ENCODE measurements at regions of chr4 and their contacts with region 1.

Region 1: GRCh38 chr4:98260579-98261290 is 449 bp upstream of the RAP1GDS1 start:
- DNase-seq: peak; percentile 91
- H3K4me3 Mint-ChIP-seq: peak overlapping the region; percentile 92
- H3K27ac Mint-ChIP-seq: peak overlapping the region; percentile 93
- H3K4me1 Mint-ChIP-seq: peaks cover 44% of the 10 kb centered on the region
- H3K27me3 Mint-ChIP-seq: no peaks in the 10 kb centered on the region

Region 2: GRCh38 chr4:98143001-98143899 is 117.5 kb before region 1 on chr4 and contains the start of gene STPG2:
- CTCF ChIA-PET with region 1: interaction called, 3 read pairs
- POLR2A ChIA-PET with region 1: interaction called, 15 read pairs
- DNase-seq: peak; percentile 94
- H3K4me3 Mint-ChIP-seq: peak within 1 kb of the TSS; percentile 79
- H3K27ac Mint-ChIP-seq: peak within 1 kb of the TSS; percentile 85
- H3K4me1 Mint-ChIP-seq: peaks cover 27% of the 10 kb centered on the region
- H3K27me3 Mint-ChIP-seq: peaks cover under 1% of the 10 kb centered on the region
- total RNA-seq, gene STPG2: not detected

Region 3: DNA sequence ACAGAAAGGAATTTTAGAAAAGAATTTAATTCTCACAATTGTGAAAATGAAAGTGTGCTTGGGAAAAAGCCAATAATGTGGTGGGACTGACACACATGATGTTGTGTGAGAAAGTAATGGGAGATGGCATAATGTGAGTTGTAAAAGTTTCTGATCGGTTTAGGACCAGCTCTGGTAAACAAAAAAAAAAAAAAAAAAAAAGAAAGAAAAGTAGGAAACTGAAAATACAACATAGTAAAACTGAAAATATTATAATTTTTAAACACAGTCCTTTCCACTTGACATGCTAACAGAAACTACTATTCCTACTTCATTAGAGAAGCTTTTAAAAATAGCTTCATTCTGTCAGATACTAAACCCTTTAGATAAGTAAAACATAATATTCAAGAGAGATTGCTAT is 28.6 kb after region 1 on chr4:
- CTCF ChIA-PET with region 1: no interaction called
- POLR2A ChIA-PET with region 1: interaction called, 14 read pairs
- DNase-seq: no peak
- H3K4me3 Mint-ChIP-seq: peak overlapping the region; percentile 11
- H3K27ac Mint-ChIP-seq: peak overlapping the region; percentile 17
- H3K4me1 Mint-ChIP-seq: peaks cover 32% of the 10 kb centered on the region
- H3K27me3 Mint-ChIP-seq: no peaks in the 10 kb centered on the region

Region 4: DNA sequence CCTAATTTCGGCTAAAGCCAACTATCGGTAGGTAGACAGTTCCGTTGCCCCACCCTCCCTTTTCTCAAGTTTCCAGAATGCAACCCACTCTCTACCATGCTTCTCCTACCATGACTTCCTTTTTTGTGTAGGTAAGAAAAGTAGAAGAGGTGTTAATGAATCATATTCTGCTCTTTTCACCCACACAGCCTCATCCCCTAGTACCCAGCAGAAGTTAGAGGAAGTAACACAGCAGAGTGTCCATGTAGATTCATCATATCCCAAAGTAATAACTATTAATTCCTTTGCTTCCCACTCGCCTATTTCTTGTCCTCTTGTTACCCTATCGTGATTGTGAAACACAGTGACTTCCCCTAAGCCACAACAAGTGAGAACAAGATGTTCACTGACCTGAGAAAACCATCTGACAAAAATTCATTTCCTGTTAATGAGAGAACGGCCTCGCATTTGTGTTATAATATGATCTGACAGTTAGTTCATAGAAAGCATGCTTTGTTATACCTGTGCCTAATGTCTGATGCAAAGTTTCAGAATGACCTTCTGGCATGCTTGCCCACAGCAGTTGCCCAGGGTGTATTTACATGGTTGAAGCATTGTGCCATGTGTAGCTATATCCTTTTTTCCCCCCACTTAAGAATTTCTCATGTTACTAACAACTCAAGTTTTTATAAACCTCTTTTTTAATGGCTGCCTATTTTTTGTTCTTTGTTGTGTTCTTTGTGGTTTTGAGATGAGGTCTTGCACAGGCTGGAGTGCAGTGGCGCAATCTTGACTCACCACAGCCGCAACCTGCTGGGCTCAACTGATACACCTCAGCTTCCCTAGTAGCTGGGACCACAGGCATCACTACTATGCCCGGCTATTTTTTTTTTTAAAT is 186.0 kb after region 1 on chr4:
- CTCF ChIA-PET with region 1: no interaction called
- POLR2A ChIA-PET with region 1: interaction called, 19 read pairs
- DNase-seq: peak; percentile 79
- H3K4me3 Mint-ChIP-seq: peak overlapping the region; percentile 40
- H3K27ac Mint-ChIP-seq: peak overlapping the region; percentile 91
- H3K4me1 Mint-ChIP-seq: peaks cover 43% of the 10 kb centered on the region
- H3K27me3 Mint-ChIP-seq: no peaks in the 10 kb centered on the region

Region 5: GRCh38 chr4:99088481-99089365 is 828.0 kb after region 1 on chr4 and contains the start of gene ADH5:
- CTCF ChIA-PET with region 1: no interaction called
- POLR2A ChIA-PET with region 1: interaction called, 10 read pairs
- DNase-seq: peak; percentile 92
- H3K4me3 Mint-ChIP-seq: peak within 1 kb of the TSS; percentile 93
- H3K27ac Mint-ChIP-seq: peak within 1 kb of the TSS; percentile 97
- H3K4me1 Mint-ChIP-seq: peaks cover 45% of the 10 kb centered on the region
- H3K27me3 Mint-ChIP-seq: no peaks in the 10 kb centered on the region
- total RNA-seq, gene ADH5: 107 to 114 TPM

Measured in activated CD4-positive, alpha-beta memory T cell treated with anti-CD3 and anti-CD28 coated beads, Interleukin-2, amount 10 ng/mL, durations not matched to agents 7 days and 5 days (primary cell).